ENCODE measurements at regions of chr15 and their contacts with region 1.

Region 1: GRCh38 chr15:71386448-71387236 is 271.4 kb downstream of the THSD4 start:
- DNase-seq: no peak
- ATAC-seq: no peak
- H3K4me3 Mint-ChIP-seq: no peak overlapping the region
- H3K27ac Mint-ChIP-seq: no peak overlapping the region
- H3K4me1 Mint-ChIP-seq: peaks cover 8% of the 10 kb centered on the region
- H3K27me3 Mint-ChIP-seq: peaks cover 26% of the 10 kb centered on the region

Region 2: GRCh38 chr15:71411538-71412482 is 25.2 kb after region 1 on chr15:
- CTCF ChIA-PET with region 1: no interaction called
- DNase-seq: no peak
- ATAC-seq: no peak
- H3K4me3 Mint-ChIP-seq: no peak overlapping the region
- H3K27ac Mint-ChIP-seq: no peak overlapping the region
- H3K4me1 Mint-ChIP-seq: no peaks in the 10 kb centered on the region
- H3K27me3 Mint-ChIP-seq: peaks cover 7% of the 10 kb centered on the region

Region 3: DNA sequence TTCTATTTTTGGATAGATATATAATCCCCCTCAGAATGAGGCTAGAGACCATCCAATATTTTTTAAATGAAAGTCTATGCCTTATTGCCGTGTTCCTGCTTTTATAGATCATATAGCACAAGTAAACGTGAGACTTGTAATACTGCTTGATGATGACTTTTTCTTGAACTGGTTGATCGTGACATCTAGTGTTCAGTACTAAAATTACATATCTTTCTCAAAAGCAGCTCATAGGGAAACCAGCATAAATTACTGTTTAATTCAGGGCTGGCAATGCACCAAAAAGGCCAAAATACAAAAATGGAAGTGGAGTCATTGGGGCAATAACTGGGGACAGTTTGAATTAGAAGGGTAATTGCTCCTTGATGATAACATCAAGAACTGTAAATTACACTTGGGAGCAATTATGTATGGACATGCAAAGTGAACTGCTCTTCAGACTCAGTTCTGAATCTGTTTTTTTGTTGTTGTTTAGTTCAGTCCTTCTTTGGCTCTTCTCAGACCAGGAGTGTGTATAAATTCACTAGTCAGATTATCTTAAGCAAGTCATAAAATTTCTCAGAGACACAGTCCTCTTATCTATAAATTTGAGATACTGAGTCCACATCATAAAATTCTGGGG is 54.0 kb after region 1 on chr15:
- CTCF ChIA-PET with region 1: interaction called, 26 read pairs
- DNase-seq: no peak
- ATAC-seq: no peak
- H3K4me3 Mint-ChIP-seq: no peak overlapping the region
- H3K27ac Mint-ChIP-seq: no peak overlapping the region
- H3K4me1 Mint-ChIP-seq: no peaks in the 10 kb centered on the region
- H3K27me3 Mint-ChIP-seq: peaks cover 10% of the 10 kb centered on the region